ENCODE measurements at regions of chr6 and their contacts with region 1.

Region 1: DNA sequence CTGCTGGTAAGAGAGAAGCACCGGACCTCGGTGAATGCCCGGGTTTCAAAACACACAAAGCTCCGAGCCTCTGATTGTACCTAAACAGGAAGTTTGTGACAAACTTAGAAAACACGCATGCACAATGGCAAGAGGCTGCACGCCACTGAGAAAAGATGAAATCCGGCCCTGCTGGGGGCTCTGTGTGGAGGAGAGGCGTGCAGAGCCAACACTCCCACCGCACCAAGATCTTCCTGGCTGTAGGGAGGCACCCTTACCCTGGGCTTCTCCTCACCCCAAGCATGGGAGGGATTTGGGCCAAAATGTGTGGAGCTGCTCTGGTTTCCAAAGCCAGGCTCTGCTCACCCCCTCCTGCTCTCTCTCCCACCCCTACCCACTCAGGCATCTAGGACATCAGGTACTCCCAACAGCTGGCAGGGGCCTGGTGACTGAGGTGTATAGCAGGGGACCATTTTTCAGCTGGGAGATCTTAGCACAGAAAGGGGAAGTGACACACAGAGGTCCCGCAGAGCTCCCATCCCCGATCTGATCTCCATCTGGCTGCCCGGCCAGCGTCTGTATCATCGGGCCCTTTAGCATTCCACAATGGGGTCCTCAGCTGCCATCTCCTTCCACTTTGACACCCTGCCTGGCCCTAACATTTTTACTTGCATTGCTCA is 84.2 kb downstream of the TRERF1 start:
- DNase-seq: peak; percentile 42
- H3K4me3 Mint-ChIP-seq: peak overlapping the region; percentile 70
- H3K27ac Mint-ChIP-seq: peak overlapping the region; percentile 85
- H3K4me1 Mint-ChIP-seq: peaks cover 81% of the 10 kb centered on the region
- H3K27me3 Mint-ChIP-seq: no peaks in the 10 kb centered on the region

Region 2: DNA sequence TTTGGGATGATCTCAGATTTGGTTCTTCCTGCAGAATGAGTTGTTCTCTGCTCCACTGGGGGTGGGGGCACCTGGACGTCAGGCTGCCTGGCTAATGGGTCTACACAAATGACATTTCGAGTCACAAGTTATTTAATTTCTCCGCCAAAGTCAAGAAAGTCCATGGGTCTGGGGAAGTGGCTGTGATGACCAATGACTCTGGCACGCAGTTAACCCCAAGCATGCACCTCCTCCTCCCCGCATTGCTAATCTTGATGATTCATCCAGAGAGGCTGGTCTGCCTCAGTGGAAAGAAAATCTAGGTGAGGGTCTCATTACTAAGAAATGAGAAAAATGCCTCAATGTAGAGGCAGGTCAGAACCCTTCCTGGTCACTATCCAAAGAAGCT is 51.5 kb before region 1 on chr6:
- intact Hi-C with region 1: loop called (anchors 2 kb)
- DNase-seq: no peak
- H3K4me3 Mint-ChIP-seq: no peak overlapping the region
- H3K27ac Mint-ChIP-seq: peak overlapping the region; percentile 80
- H3K4me1 Mint-ChIP-seq: peaks cover 72% of the 10 kb centered on the region
- H3K27me3 Mint-ChIP-seq: no peaks in the 10 kb centered on the region

Region 3: DNA sequence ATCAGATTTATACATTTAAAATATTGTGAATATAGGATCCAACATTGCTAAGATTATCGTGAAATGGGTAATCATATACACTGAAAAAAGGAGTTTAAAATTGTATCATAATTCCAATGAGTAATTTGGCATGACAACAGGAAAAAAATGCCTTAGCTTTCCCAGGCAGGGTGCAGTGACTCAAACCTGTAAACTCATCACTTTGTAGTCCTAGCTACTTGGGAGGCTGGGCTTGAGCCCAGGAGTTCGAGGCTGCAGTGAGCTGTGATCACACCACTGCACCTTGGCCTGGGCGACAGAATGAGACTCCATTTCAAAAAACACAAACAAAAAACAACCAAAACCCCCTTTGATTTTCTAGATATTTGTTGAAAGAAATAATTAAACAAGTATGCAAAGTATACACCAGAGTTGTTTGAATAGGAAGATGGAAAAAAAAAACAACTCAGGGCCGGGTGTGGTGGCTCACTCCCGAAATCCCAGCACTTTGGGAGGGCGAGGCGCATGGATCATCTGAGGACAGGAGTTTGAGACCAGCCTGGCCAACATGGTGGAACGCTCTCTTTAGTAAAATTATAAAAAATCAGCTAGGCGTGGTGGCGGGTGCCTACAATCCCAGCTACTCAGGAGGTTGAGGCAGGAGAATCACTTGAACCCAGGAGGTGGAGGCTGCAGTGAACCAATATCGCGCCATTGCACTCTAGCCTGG is 14.5 kb before region 1 on chr6:
- intact Hi-C with region 1: loop called (anchors 1 kb)
- DNase-seq: no peak
- H3K4me3 Mint-ChIP-seq: no peak overlapping the region
- H3K27ac Mint-ChIP-seq: no peak overlapping the region
- H3K4me1 Mint-ChIP-seq: peaks cover 31% of the 10 kb centered on the region
- H3K27me3 Mint-ChIP-seq: no peaks in the 10 kb centered on the region

Region 4: GRCh38 chr6:42402184-42402583 is 34.7 kb after region 1 on chr6:
- intact Hi-C with region 1: loop called (anchors 1 kb)
- DNase-seq: peak; percentile 66
- H3K4me3 Mint-ChIP-seq: peak overlapping the region; percentile 68
- H3K27ac Mint-ChIP-seq: peak overlapping the region; percentile 87
- H3K4me1 Mint-ChIP-seq: peaks cover 82% of the 10 kb centered on the region
- H3K27me3 Mint-ChIP-seq: no peaks in the 10 kb centered on the region

Region 5: GRCh38 chr6:42547407-42548329 is 180.2 kb after region 1 on chr6:
- intact Hi-C with region 1: loop called (anchors 5 kb)
- DNase-seq: peak; percentile 82
- H3K4me3 Mint-ChIP-seq: peak overlapping the region; percentile 71
- H3K27ac Mint-ChIP-seq: peak overlapping the region; percentile 29
- H3K4me1 Mint-ChIP-seq: peaks cover 13% of the 10 kb centered on the region
- H3K27me3 Mint-ChIP-seq: peaks cover 18% of the 10 kb centered on the region